ENCODE measurements at regions of chr9 and their contacts with region 1.

Region 1: GRCh38 chr9:7058473-7058872 is 300.7 kb downstream of the KDM4C start:
- DNase-seq: no peak
- H3K4me3 Mint-ChIP-seq: no peak overlapping the region
- H3K27ac Mint-ChIP-seq: no peak overlapping the region
- H3K4me1 Mint-ChIP-seq: no peaks in the 10 kb centered on the region
- H3K27me3 Mint-ChIP-seq: no peaks in the 10 kb centered on the region
- CTCF ChIP-seq: no peak

Region 2: DNA sequence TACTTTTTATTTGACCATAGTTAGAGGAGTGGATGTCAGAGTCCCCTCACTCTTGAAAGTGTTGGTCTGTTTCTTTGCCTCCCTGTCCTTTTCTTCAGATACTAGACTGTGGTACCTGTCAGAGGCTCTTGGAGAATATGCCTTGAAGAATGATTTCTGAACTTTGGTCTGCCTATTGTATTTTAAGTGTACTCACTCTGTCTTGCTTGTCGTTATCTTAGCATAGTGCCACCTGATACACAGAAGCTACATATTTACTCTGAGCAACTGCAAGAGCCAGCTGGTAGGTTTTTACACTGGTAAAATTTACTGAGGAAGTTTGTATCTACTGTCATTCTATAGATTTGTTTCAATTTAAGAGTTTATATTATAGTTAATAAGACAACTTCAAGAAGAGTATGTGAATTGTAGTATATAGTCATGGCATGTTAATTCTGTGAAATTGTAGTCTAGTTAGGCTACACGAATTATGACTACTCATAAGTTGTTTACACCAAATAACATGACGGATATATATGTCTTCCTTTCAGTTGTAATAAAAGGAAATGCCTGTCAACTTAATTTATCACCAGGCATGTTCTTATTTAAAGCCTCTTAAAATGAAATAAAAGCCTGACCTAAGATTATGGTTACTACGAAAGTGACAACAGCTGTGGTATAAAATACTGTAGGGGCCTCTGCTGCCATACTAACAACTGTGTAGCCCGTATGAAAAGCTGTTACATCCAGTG is 99.0 kb before region 1 on chr9:
- CTCF ChIA-PET with region 1: no interaction called
- POLR2A ChIA-PET with region 1: no interaction called
- intact Hi-C with region 1: no loop called
- DNase-seq: no peak
- H3K4me3 Mint-ChIP-seq: no peak overlapping the region
- H3K27ac Mint-ChIP-seq: no peak overlapping the region
- H3K4me1 Mint-ChIP-seq: no peaks in the 10 kb centered on the region
- H3K27me3 Mint-ChIP-seq: no peaks in the 10 kb centered on the region
- CTCF ChIP-seq: no peak

Region 3: GRCh38 chr9:7037176-7037575 is 21.3 kb before region 1 on chr9:
- CTCF ChIA-PET with region 1: interaction called, 10 read pairs
- POLR2A ChIA-PET with region 1: interaction called, 3 read pairs
- intact Hi-C with region 1: no loop called
- DNase-seq: no peak
- H3K4me3 Mint-ChIP-seq: no peak overlapping the region
- H3K27ac Mint-ChIP-seq: no peak overlapping the region
- H3K4me1 Mint-ChIP-seq: peaks cover 8% of the 10 kb centered on the region
- H3K27me3 Mint-ChIP-seq: no peaks in the 10 kb centered on the region
- CTCF ChIP-seq: no peak

Measured in MCF 10A (cell line).